Activated B cell treated with CpG ODN at 0.5 μM for 24 hours (primary cell): ENCODE measurements at regions of chr12 and their contacts with region 1.

Region 1: DNA sequence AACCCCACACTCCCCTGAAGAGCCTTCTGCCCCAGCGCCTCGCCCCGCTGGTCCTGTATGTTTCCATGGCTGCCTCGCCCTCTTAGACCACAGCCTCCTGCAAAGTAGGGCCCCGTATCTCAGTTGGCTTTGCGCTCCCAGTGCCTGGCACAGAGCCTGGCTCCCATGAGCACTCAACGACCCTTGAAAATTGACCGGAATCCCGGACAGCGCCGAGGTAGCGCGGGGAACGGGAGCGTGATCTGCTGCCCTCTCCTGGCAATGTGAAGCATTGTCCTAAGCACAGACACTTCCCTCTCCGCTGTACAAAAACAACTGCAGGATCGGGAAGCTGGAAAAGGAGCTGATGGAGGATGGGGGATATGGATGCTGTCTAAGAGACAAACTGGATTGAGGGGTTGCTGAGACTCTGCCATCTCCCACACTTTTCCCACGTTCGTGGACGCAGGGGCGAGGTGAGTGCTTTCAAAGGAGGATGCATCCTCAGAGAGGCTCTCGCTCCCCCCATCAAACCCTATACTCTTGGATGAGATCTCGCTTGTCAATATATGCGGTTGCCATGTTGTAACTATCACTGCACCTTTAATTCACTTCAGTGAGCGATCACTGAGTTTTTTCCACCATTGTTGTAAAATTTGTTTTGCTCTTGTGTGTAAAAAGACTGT is 10.7 kb upstream of the FKBP4 start:
- DNase-seq: peak; percentile 43
- ATAC-seq: peak; percentile 92
- H3K4me3 Mint-ChIP-seq: peak overlapping the region; percentile 85
- H3K27ac Mint-ChIP-seq: no peak overlapping the region
- H3K4me1 Mint-ChIP-seq: peaks cover 9% of the 10 kb centered on the region
- H3K27me3 Mint-ChIP-seq: peaks cover 17% of the 10 kb centered on the region
- CTCF ChIP-seq: no peak

Region 2: DNA sequence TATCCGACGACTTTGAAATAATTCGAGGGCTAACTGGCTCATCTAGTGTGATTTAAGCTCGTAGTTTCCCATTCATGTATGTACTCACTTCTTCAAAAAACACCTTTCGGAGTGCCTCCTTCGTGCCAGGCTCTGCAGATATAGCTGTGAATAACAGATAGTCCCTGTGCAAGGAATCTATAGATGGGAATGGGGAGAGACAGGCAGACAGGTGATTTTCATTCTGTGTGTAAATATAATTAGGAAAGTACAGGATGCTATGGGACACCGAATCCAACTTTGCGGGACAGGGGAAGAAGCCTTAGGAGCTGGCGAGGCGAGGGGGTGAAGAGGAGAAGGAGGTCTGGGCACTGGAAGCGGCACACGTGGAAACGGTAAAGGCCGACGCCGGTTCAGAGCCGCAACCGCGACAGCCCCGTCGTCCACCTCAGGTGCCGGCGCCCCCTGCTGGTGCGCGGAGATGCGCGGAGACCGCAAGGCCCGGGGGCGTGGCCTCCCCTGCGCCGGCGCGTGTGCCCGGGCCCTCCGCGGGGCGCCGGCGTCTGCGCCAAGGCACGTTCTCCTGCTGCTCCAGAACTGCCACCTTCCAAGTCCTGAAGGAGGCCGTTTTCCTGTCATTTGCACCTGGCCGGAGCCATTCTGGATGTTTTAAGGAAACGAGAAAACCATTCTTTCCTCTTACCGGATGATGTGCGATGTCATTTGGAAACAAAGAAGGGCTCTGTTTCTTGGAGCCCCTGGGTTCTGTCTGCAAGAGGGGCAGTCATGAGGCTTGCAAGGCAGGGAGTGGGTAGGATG is 749.2 kb before region 1 on chr12:
- CTCF ChIA-PET with region 1: no interaction called
- POLR2A ChIA-PET with region 1: no interaction called
- intact Hi-C with region 1: loop called (anchors 10 kb)
- DNase-seq: peak; percentile 79
- ATAC-seq: peak; percentile 100
- H3K4me3 Mint-ChIP-seq: peak overlapping the region; percentile 70
- H3K27ac Mint-ChIP-seq: no peak overlapping the region
- H3K4me1 Mint-ChIP-seq: peaks cover 10% of the 10 kb centered on the region
- H3K27me3 Mint-ChIP-seq: peaks cover 69% of the 10 kb centered on the region
- CTCF ChIP-seq: no peak

Region 3: DNA sequence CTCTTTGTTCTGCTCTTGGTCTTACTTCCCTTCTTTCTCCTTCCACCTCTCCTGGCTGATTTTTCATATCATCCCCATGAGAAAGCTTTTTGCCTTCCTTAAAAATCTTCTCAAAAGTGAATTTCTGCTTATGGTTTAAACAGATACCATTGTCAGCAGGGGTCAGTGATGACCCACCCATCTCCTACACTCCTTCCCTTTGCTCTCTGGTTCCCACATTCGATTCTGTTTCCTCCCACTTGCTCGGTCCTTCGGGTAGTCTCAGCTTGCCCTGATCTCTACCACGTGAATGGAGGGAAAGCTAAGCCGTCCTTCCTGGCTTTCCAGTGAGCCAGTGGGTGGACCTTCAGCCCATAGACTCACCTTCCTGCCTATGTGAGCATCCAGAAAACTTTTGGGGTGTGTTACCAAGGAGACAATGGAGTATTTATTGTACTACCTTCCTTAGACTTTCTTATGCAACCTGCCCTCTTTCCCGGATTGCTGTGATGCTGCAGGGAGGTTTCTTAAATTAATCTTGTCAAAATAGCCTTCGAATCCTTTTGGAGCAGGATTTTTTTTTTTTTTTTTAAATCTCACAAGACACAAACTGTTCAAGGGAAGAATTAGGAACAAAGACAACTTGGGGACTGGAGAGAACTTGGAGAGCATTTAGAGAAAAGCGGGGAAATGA is 424.9 kb before region 1 on chr12:
- CTCF ChIA-PET with region 1: no interaction called
- POLR2A ChIA-PET with region 1: no interaction called
- intact Hi-C with region 1: no loop called
- DNase-seq: no peak
- ATAC-seq: no peak
- H3K4me3 Mint-ChIP-seq: no peak overlapping the region
- H3K27ac Mint-ChIP-seq: no peak overlapping the region
- H3K4me1 Mint-ChIP-seq: peaks cover 22% of the 10 kb centered on the region
- H3K27me3 Mint-ChIP-seq: peaks cover 19% of the 10 kb centered on the region
- CTCF ChIP-seq: no peak

Region 4: DNA sequence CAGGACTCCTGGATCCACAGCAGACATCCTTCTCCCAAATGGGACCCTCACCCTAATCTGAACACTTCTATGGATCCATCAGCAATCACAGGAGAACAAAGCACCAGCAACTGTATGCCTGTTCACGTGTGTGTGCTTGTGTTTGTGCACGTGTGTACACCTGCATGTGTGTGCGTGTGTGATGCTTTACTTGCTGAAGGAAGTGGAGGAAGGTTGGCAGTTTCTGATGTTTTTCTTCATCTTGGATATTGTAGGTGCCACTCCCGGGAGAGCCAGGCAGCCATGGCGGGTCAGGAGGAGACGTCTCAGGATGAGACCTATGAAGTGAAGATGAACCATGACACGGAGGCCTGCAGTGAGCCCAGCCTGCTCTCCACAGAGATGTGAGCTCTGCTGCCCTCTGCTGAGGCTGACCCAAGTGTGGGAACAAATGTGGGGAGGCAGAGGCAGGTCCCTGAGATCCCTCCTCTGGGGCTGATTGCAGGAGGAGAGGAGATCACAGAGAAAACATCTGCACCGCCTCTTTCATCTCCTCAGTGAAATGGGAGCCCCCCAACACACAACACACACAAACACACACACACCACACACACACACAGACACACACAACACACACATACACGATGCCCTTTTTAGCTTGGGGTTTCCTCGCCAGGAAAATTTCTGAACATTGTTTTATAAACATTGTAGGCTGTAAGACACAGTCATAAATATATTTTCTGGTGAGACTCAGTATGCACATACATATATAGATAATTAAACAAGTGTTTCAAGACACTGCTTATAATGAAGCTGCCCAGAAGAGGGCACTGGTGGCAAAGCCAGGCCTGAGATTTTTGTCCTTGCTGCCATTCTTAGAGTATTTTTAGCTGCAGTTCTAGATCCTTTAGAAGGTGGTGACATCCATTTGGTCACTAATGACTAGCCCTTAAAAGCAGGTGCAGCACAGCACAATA is 101.5 kb before region 1 on chr12:
- CTCF ChIA-PET with region 1: interaction called, 11 read pairs
- POLR2A ChIA-PET with region 1: no interaction called
- intact Hi-C with region 1: loop called (anchors 1 kb)
- DNase-seq: no peak
- ATAC-seq: peak; percentile 52
- H3K4me3 Mint-ChIP-seq: no peak overlapping the region
- H3K27ac Mint-ChIP-seq: no peak overlapping the region
- H3K4me1 Mint-ChIP-seq: peaks cover 4% of the 10 kb centered on the region
- H3K27me3 Mint-ChIP-seq: no peaks in the 10 kb centered on the region
- CTCF ChIP-seq: no peak